ENCODE measurements at regions of chr2 and their contacts with region 1.

Region 1: DNA sequence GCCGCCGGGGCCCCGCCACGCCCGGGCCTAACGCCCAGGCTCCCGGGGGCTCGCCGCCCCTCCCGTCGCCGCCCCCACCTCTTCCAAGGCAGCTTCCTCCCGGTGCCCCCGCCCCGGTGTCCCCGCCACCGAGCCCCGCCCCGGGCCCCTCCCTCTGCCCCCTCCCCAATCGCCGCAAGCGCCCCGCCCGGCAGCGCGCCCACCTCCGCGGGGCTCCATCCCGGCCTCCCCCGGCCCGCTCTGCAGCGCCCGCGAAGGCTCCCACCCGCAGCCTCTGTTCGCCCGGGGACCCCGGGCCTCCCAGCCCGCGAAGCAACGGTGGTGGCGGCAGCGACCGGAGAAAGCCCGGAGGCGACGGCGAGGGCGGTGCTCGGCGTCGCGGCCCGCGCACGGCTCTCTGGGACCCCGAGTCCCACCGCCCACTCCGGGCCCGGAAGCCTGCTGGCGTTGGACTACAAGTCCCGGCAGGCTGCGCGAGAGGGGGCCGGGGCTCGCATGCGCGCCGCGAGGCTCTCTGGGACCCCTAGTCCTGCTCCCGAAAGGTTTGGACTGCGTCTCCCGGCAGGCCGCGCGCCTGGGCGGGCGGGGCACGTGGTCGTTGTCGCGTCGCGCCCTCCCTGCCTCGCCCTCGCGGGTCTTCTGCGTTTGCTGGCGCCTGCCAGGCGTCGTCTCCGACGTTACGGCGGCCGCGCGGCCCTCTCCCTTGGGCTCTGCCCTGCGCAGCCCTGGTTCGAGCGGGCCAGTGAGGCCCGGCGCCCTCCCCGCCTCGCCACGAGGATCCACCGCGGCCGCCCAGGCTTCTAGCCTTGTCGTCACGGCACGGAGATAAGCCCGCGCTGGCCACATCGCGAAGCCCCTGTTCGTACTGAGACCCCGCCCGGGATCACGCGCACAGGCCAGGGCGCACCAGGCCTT is at the start of gene STK25:
- DNase-seq: peak; percentile 93 to 99 (median 98)

Region 2: GRCh38 chr2:241315093-241315878 is 193.2 kb before region 1 on chr2 and contains the start of gene HDLBP:
- intact Hi-C with region 1: loop called (anchors 10 kb)
- DNase-seq: peak; percentile 93 to 99 (median 98)

Region 3: GRCh38 chr2:241355983-241356870 is 152.3 kb before region 1 on chr2 and contains the start of gene FARP2:
- intact Hi-C with region 1: loop called (anchors 5 kb)
- DNase-seq: peak; percentile 97 to 100 (median 100)

Region 4: GRCh38 chr2:241558532-241559322 is 50.2 kb after region 1 on chr2 and contains the start of gene BOK:
- intact Hi-C with region 1: loop called (anchors 2 kb)
- DNase-seq: peak; percentile 67 to 93 (median 84)

Region 5: GRCh38 chr2:241637000-241637791 is 128.7 kb after region 1 on chr2 and contains the starts of genes ATG4B and THAP4:
- intact Hi-C with region 1: loop called (anchors 5 kb)
- DNase-seq: peak; percentile 56 to 93 (median 86)

Measured in head of caudate nucleus (tissue), 42 donors.